Activated CD4-positive, alpha-beta memory T cell treated with anti-CD3 and anti-CD28 coated beads for 36 hours (primary cell): ENCODE measurements at regions of chr7 and their contacts with region 1.

Region 1: GRCh38 chr7:55132890-55133551 is 114.2 kb downstream of the EGFR start:
- DNase-seq: peak; percentile 51
- H3K4me3 Mint-ChIP-seq: no peak overlapping the region
- H3K27ac Mint-ChIP-seq: no peak overlapping the region
- H3K4me1 Mint-ChIP-seq: peaks cover 20% of the 10 kb centered on the region
- H3K27me3 Mint-ChIP-seq: peaks cover 17% of the 10 kb centered on the region

Region 2: GRCh38 chr7:54802841-54803240 is 330.2 kb before region 1 on chr7:
- CTCF ChIA-PET with region 1: no interaction called
- POLR2A ChIA-PET with region 1: no interaction called
- intact Hi-C with region 1: loop called (anchors 5 kb)
- DNase-seq: peak; percentile 72
- H3K4me3 Mint-ChIP-seq: no peak overlapping the region
- H3K27ac Mint-ChIP-seq: no peak overlapping the region
- H3K4me1 Mint-ChIP-seq: peaks cover 6% of the 10 kb centered on the region
- H3K27me3 Mint-ChIP-seq: peaks cover 16% of the 10 kb centered on the region

Region 3: GRCh38 chr7:54995631-54996340 is 137.2 kb before region 1 on chr7:
- CTCF ChIA-PET with region 1: no interaction called
- POLR2A ChIA-PET with region 1: no interaction called
- intact Hi-C with region 1: loop called (anchors 1 kb)
- DNase-seq: peak; percentile 50
- H3K4me3 Mint-ChIP-seq: no peak overlapping the region
- H3K27ac Mint-ChIP-seq: peak overlapping the region; percentile 65
- H3K4me1 Mint-ChIP-seq: peaks cover 29% of the 10 kb centered on the region
- H3K27me3 Mint-ChIP-seq: peaks cover 7% of the 10 kb centered on the region

Region 4: GRCh38 chr7:55073945-55074499 is 59.0 kb before region 1 on chr7:
- CTCF ChIA-PET with region 1: no interaction called
- POLR2A ChIA-PET with region 1: no interaction called
- intact Hi-C with region 1: loop called (anchors 2 kb)
- DNase-seq: peak; percentile 54
- H3K4me3 Mint-ChIP-seq: peak overlapping the region; percentile 10
- H3K27ac Mint-ChIP-seq: no peak overlapping the region
- H3K4me1 Mint-ChIP-seq: peaks cover 13% of the 10 kb centered on the region
- H3K27me3 Mint-ChIP-seq: peaks cover 1% of the 10 kb centered on the region

Region 5: DNA sequence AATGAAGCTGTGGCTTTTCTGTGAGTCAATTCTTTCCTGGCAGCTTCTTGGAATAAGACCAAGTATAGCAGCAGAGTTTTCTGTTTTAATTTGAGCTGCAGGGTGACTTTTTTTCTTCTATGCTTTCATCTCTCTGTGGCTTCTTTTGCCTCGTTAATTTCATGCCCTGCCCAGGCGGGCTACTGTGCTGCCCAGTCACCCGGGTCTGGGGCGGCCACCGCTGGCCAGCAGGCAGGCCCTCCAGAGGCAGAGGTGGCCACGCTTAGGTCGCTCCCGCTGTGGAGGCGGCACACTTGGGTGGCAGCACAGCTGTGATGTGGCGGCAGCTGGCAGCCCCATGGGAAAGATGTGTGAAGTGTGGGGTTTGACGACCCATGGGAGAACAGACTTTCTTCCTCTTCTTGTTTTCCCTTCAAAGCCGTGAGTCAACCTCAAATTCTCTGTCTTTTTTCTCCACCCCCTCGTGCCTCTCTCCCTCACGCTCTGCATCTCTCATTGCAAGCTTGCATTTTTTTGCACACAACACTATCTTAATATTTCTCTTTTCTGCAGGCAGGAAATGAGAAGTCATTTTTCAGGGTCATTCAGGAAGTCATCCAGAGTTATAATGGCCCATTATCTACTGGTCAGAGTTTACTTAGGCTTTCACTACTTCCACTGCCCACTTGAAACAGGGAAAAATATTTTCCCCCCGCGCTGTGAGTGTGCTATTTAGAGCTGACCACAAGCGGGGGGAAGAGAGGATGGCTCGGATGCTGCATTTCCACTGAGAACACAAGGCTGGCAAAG is 46.4 kb before region 1 on chr7:
- CTCF ChIA-PET with region 1: no interaction called
- POLR2A ChIA-PET with region 1: no interaction called
- intact Hi-C with region 1: loop called (anchors 5 kb)
- DNase-seq: peak; percentile 24
- H3K4me3 Mint-ChIP-seq: no peak overlapping the region
- H3K27ac Mint-ChIP-seq: no peak overlapping the region
- H3K4me1 Mint-ChIP-seq: peaks cover 11% of the 10 kb centered on the region
- H3K27me3 Mint-ChIP-seq: peaks cover 12% of the 10 kb centered on the region

Region 6: DNA sequence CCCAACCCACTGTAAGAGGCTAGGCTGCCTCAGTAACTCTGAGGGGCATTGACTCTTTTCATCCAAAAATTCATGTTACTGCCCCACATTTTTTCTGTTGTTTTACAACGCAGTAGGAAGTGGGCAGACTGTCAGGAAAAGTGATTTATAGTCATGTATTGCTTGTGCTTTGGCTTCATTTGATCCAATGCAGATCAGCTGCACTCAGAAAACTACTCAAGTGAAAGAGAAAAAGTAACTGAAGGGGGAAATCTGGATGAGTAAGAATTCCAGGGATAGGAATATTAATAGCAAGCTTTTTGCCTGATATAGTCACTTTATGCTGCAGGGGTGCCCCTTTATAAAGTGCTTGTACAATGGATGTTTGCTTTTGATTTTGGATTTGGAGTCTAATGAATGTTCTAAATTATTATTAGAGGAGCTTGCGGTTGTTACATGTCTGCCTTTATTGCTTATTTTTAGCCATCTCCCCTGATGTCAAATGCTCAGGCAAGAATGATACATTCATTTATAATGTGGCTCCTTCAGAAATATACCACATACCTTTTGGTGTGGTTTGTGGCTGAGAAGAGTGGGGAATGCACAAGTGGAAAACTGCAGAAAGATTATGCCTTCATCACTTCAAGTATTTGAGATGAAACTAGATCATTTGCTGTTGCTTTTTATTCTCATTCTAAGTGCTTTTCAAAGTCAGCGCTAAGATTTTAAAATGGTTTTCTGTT is 28.1 kb before region 1 on chr7:
- CTCF ChIA-PET with region 1: no interaction called
- POLR2A ChIA-PET with region 1: no interaction called
- intact Hi-C with region 1: loop called (anchors 2 kb)
- DNase-seq: no peak
- H3K4me3 Mint-ChIP-seq: no peak overlapping the region
- H3K27ac Mint-ChIP-seq: no peak overlapping the region
- H3K4me1 Mint-ChIP-seq: peaks cover 3% of the 10 kb centered on the region
- H3K27me3 Mint-ChIP-seq: peaks cover 26% of the 10 kb centered on the region

Region 7: GRCh38 chr7:55309040-55309991 is 176.3 kb after region 1 on chr7:
- CTCF ChIA-PET with region 1: interaction called, 3 read pairs
- POLR2A ChIA-PET with region 1: interaction called, 6 read pairs
- intact Hi-C with region 1: loop called (anchors 2 kb)
- DNase-seq: peak; percentile 95
- H3K4me3 Mint-ChIP-seq: peak overlapping the region; percentile 16
- H3K27ac Mint-ChIP-seq: peak overlapping the region; percentile 90
- H3K4me1 Mint-ChIP-seq: peaks cover 43% of the 10 kb centered on the region
- H3K27me3 Mint-ChIP-seq: peaks cover 25% of the 10 kb centered on the region